ENCODE measurements at regions of chr3 and their contacts with region 1.

Region 1: GRCh38 chr3:87318617-87319021 is 42.2 kb upstream of the POU1F1 start:
- DNase-seq: no peak
- H3K4me3 Mint-ChIP-seq: no peak overlapping the region
- H3K27ac Mint-ChIP-seq: peak overlapping the region; percentile 97
- H3K4me1 Mint-ChIP-seq: peaks cover 55% of the 10 kb centered on the region
- H3K27me3 Mint-ChIP-seq: no peaks in the 10 kb centered on the region
- CTCF ChIP-seq: no peak

Region 2: GRCh38 chr3:85691196-85691595 is 1627.4 kb before region 1 on chr3:
- CTCF ChIA-PET with region 1: no interaction called
- intact Hi-C with region 1: no loop called
- DNase-seq: no peak
- H3K4me3 Mint-ChIP-seq: no peak overlapping the region
- H3K27ac Mint-ChIP-seq: no peak overlapping the region
- H3K4me1 Mint-ChIP-seq: no peaks in the 10 kb centered on the region
- H3K27me3 Mint-ChIP-seq: no peaks in the 10 kb centered on the region
- CTCF ChIP-seq: no peak

Region 3: GRCh38 chr3:87307803-87308202 is 10.8 kb before region 1 on chr3:
- CTCF ChIA-PET with region 1: no interaction called
- intact Hi-C with region 1: loop called (anchors 1 kb)
- DNase-seq: no peak
- H3K4me3 Mint-ChIP-seq: no peak overlapping the region
- H3K27ac Mint-ChIP-seq: peak overlapping the region; percentile 1
- H3K4me1 Mint-ChIP-seq: peaks cover 29% of the 10 kb centered on the region
- H3K27me3 Mint-ChIP-seq: no peaks in the 10 kb centered on the region
- CTCF ChIP-seq: no peak

Region 4: GRCh38 chr3:87333393-87333892 is 14.8 kb after region 1 on chr3:
- CTCF ChIA-PET with region 1: interaction called, 3 read pairs
- intact Hi-C with region 1: loop called (anchors 1 kb)
- DNase-seq: peak; percentile 59
- H3K4me3 Mint-ChIP-seq: peak overlapping the region; percentile 20
- H3K27ac Mint-ChIP-seq: peak overlapping the region; percentile 89
- H3K4me1 Mint-ChIP-seq: peaks cover 35% of the 10 kb centered on the region
- H3K27me3 Mint-ChIP-seq: no peaks in the 10 kb centered on the region
- CTCF ChIP-seq: no peak

Region 5: DNA sequence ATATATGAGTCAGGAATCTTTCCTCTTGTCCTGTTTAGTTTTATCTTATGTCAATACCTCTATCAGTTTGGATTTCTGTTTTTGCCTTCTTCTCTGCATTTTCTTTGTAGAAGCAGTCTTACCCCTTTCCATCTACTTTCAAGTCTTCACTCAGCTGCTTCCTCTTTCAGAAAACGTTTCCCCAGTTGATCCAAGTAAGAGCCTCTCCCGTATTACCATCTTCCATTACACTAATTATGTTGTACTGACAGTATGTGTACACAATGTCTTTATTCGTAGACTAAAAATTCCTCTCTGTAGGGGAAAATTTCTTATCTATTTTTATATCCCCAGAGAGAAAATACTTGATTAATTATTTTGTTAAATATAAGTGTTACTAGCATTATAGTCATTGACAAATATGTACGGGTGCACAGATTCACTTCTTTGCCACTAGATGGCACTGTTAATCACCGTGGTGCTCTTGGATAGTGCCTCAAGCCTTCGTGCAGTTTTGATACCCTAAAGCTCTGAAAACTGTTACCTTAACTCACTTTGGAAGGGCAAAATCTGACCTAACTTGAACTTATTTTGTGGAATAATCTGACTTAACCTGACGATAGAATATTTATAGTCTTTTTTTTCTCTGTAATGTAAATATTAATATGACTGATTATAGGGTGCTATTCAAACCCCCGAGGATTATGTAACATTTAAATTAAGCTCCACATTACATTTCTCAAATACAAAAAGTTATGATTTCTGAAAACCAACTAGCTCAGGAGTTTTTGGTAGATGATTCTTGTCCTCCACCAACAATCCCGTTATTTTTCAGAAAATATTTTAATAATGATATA is 32.0 kb after region 1 on chr3:
- CTCF ChIA-PET with region 1: interaction called, 5 read pairs
- intact Hi-C with region 1: loop called (anchors 1 kb)
- DNase-seq: no peak
- H3K4me3 Mint-ChIP-seq: no peak overlapping the region
- H3K27ac Mint-ChIP-seq: peak overlapping the region; percentile 79
- H3K4me1 Mint-ChIP-seq: peaks cover 61% of the 10 kb centered on the region
- H3K27me3 Mint-ChIP-seq: no peaks in the 10 kb centered on the region
- CTCF ChIP-seq: peak; percentile 62

Region 6: DNA sequence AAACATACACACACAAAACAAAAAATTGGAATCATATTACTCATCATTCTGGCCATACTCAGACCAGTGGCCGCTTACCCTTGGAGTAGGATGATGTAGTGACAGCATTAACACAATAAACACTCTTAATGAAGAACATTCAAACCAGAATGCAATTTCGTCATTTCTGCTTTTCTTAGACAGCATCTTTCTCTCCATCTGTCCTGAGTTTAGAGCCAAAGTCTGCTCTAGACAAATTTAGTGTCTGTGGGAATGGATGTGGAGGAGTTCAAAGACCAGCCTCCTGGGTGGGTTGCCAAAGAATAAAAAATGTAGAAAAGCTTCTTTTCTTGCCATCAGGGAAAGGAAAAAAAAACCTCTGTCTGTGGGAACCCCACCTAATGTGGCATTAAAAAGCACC is 170.1 kb after region 1 on chr3:
- CTCF ChIA-PET with region 1: no interaction called
- intact Hi-C with region 1: no loop called
- DNase-seq: no peak
- H3K4me3 Mint-ChIP-seq: no peak overlapping the region
- H3K27ac Mint-ChIP-seq: no peak overlapping the region
- H3K4me1 Mint-ChIP-seq: no peaks in the 10 kb centered on the region
- H3K27me3 Mint-ChIP-seq: no peaks in the 10 kb centered on the region
- CTCF ChIP-seq: no peak

Measured in Calu3 (cell line).